Prostate gland (tissue), 2 donors: ENCODE measurements at regions of chr3 and their contacts with region 1.

Region 1: DNA sequence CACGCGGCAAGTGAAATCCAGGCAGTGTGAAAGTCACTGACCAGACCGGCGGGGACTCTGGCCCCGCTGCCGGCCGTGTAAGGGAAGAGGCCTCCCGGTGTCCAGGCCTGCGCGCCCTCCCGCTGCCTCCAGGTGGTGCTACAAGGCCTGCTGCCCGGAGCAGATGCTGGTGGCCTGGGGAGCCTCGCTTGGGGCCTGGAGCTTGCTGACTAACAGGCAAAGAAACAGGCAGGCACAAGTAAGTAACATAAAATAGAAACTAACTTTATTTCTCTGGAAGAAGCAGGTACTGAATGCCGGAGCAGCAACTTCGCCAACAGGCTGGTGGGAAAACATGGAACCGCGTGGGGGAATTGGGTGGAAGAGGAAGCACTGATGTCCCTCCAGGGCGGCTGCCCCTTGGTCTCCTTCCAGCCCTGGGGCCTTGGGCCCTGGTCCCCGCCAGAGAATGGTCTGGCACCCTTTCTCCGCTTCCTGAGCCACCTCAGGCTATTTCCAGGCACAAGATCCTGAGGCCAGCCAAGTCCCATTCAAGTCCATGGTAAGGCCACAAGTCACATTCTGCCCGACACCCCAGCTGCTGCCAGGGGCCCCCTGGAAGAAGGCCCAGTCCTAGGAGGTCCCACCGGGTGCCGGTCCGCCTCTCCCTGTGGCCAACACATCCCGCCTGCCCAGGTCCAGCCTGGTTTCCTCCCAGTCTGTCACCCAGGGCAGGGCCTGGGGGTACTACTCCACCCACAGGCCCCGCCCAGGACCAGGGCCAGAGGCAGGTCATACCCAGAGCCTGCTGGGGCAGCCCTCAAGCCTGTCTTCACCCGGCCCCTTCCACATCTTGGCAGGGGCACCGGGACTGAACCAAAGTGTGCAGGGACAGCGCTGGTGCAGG is 45.0 kb downstream of the TNK2 start:
- DNase-seq: peak; percentile 79
- H3K4me3 ChIP-seq: no peak overlapping the region
- H3K27ac ChIP-seq: peak overlapping the region; percentile 16 to 48
- H3K4me1 ChIP-seq: peaks cover 2% of the 10 kb centered on the region
- H3K27me3 ChIP-seq: no peaks in the 10 kb centered on the region
- CTCF ChIP-seq: peak; percentile 60 to 93 (median 84)
- POLR2A ChIP-seq: no peak

Region 2: GRCh38 chr3:195337747-195338146 is 525.6 kb before region 1 on chr3:
- intact Hi-C with region 1: no loop called
- DNase-seq: no peak
- H3K4me3 ChIP-seq: no peak overlapping the region
- H3K27ac ChIP-seq: no peak overlapping the region
- H3K4me1 ChIP-seq: no peaks in the 10 kb centered on the region
- H3K27me3 ChIP-seq: no peaks in the 10 kb centered on the region
- CTCF ChIP-seq: no peak
- POLR2A ChIP-seq: no peak

Region 3: GRCh38 chr3:195894780-195895607 is 31.6 kb after region 1 on chr3:
- intact Hi-C with region 1: loop called (anchors 1 kb)
- DNase-seq: peak; percentile 61
- H3K4me3 ChIP-seq: peak overlapping the region; percentile 48 to 49
- H3K27ac ChIP-seq: peak overlapping the region; percentile 87 to 88
- H3K4me1 ChIP-seq: peaks cover 37% of the 10 kb centered on the region
- H3K27me3 ChIP-seq: no peaks in the 10 kb centered on the region
- CTCF ChIP-seq: peak; percentile 91 to 99 (median 93)
- POLR2A ChIP-seq: no peak

Region 4: GRCh38 chr3:195909644-195910508 is 46.5 kb after region 1 on chr3:
- intact Hi-C with region 1: loop called (anchors 5 kb)
- DNase-seq: peak; percentile 88
- H3K4me3 ChIP-seq: peak overlapping the region; percentile 72 to 80
- H3K27ac ChIP-seq: peak overlapping the region; percentile 80 to 83
- H3K4me1 ChIP-seq: peaks cover 28% of the 10 kb centered on the region
- H3K27me3 ChIP-seq: no peaks in the 10 kb centered on the region
- CTCF ChIP-seq: peak in 2 of 4 experiments; percentile 20 to 24
- POLR2A ChIP-seq: peak; percentile 61

Region 5: DNA sequence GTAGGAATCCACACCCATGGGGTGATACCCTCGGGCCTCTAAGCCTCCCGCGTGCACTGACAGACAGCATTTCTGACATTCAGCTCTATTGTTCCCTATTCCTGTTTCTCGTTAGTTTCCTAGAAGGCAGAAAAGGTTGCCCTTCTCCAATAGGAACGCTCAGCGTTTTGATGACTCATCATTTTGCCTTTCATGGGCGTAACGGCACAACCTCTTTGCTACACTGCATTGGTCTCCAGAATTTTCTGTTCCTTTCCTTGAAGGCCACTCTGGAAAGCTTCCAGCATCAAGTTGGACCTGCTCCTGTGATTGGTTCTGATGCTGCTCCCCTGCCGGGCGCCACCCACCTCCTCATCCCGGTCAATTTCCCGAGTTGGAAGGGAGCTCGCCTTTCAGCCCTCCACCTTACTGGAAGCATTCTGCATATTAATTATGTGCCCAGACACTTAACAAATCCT is 58.0 kb after region 1 on chr3:
- intact Hi-C with region 1: no loop called
- DNase-seq: no peak
- H3K4me3 ChIP-seq: no peak overlapping the region
- H3K27ac ChIP-seq: no peak overlapping the region
- H3K4me1 ChIP-seq: no peaks in the 10 kb centered on the region
- H3K27me3 ChIP-seq: no peaks in the 10 kb centered on the region
- CTCF ChIP-seq: no peak
- POLR2A ChIP-seq: no peak

Region 6: GRCh38 chr3:196339493-196340254 is 476.3 kb after region 1 on chr3:
- intact Hi-C with region 1: no loop called
- DNase-seq: no peak
- H3K4me3 ChIP-seq: no peak overlapping the region
- H3K27ac ChIP-seq: no peak overlapping the region
- H3K4me1 ChIP-seq: no peaks in the 10 kb centered on the region
- H3K27me3 ChIP-seq: no peaks in the 10 kb centered on the region
- CTCF ChIP-seq: no peak
- POLR2A ChIP-seq: no peak